Activated CD4-positive, alpha-beta T cell treated with anti-CD3 and anti-CD28 coated beads, Interleukin-2, amount 10 ng/mL, durations not matched to agents 24 days and 14 days (primary cell): ENCODE measurements at regions of chr19 and their contacts with region 1.

Region 1: DNA sequence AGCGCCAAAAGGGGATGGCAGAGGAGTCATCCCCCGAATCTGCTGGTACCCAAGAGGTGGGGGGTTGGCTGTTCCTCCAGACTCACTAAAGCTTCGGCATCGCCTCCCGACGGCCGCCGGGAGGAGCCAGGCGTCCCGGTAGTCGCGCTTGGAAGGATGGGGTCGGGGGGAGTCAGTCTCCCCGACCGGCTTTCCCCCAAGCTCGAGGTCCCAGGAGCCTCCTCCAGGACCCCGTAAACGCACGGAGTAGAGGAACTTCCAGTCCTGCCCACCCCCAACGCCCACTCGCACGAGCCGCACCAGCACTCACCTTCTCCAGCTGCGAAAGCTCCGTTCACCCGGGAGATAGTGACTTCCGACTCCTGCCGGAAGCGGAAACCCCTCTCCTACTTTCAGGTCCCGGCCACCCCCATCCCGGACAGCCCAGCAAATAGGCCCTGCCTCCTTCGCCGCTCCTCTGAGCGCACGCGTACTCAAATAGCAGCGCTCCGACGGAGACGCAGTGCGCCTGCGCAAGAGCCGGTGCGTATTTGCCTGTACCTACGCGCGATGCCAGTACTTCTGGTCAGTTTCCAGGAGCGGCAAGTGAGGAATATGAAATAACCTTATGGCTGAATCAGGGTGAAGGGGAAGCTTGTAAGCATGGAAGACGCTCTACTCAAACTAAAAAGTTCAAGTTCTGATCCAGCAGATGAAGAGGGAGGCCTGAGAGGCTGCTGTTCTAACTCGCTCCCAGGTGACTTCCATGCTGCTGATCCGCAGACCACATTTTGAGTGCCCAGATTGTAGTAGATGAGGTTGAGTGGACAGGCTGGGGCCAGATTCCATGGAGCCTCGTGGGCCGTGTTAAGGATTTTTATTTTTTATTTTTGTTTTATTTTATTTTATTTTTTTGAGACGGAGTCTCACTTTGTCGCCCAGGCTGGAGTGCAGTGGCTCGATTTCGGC is at the start of gene ELOF1:
- DNase-seq: peak; percentile 99
- H3K4me3 Mint-ChIP-seq: peak within 1 kb of the TSS; percentile 95
- H3K27ac Mint-ChIP-seq: peak within 1 kb of the TSS; percentile 96
- H3K4me1 Mint-ChIP-seq: peaks cover 42% of the 10 kb centered on the region
- H3K27me3 Mint-ChIP-seq: no peaks in the 10 kb centered on the region
- total RNA-seq, gene ELOF1: 71.9 and 74.2 TPM in 2 replicates

Region 2: DNA sequence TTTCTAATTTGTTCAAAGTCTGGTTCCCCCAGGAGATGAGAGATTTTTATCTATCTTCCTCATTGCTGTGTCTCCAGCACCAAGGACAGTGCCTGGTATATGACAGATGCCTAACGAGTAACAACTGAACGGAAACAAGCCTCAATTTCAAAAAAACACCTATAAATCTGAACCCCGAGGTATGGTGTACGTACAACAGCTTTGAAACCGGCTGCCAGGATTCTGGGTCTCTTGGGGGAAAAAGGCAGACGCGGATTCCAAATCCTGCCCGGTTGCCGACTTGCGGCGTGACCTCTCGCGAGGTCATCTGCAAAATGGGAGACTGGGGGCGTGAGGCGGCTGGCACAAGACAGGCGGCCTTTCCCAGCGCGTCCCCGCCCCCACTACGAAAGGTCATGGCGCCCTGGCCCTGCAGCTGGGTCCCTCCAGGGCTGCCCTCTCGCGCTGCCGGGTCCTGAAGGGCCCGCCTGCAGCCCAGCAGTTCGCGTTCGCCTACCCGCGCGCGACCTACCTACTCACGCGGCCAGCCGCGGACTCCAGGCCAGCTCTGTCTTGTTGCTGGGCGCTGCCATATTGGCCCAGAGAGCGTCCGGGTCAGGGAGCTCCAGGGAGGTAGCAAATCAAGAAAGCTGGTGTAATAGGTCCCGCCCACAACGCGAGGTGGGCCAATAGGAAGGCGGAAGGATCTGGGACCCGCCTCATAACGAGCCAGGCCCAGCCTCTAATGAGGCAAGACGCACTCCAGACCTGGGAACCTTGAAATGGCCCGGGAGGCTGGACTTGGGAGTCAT is 30.4 kb before region 1 on chr19 and contains the start of gene ECSIT:
- intact Hi-C with region 1: loop called (anchors 2 kb)
- DNase-seq: peak; percentile 97
- H3K4me3 Mint-ChIP-seq: peak within 1 kb of the TSS; percentile 93
- H3K27ac Mint-ChIP-seq: peak within 1 kb of the TSS; percentile 93
- H3K4me1 Mint-ChIP-seq: peaks cover 15% of the 10 kb centered on the region
- H3K27me3 Mint-ChIP-seq: no peaks in the 10 kb centered on the region
- total RNA-seq, gene ECSIT: 39.7 and 41.6 TPM in 2 replicates

Region 3: GRCh38 chr19:11535792-11536595 is 23.2 kb before region 1 on chr19:
- intact Hi-C with region 1: loop called (anchors 1 kb)
- DNase-seq: peak; percentile 96
- H3K4me3 Mint-ChIP-seq: peak overlapping the region; percentile 67
- H3K27ac Mint-ChIP-seq: peak overlapping the region; percentile 45
- H3K4me1 Mint-ChIP-seq: peaks cover 8% of the 10 kb centered on the region
- H3K27me3 Mint-ChIP-seq: peaks cover 29% of the 10 kb centered on the region

Region 4: GRCh38 chr19:11581740-11582139 is 22.6 kb after region 1 on chr19:
- intact Hi-C with region 1: loop called (anchors 1 kb)
- DNase-seq: peak; percentile 83
- H3K4me3 Mint-ChIP-seq: peak overlapping the region; percentile 76
- H3K27ac Mint-ChIP-seq: peak overlapping the region; percentile 90
- H3K4me1 Mint-ChIP-seq: peaks cover 23% of the 10 kb centered on the region
- H3K27me3 Mint-ChIP-seq: no peaks in the 10 kb centered on the region

Region 5: DNA sequence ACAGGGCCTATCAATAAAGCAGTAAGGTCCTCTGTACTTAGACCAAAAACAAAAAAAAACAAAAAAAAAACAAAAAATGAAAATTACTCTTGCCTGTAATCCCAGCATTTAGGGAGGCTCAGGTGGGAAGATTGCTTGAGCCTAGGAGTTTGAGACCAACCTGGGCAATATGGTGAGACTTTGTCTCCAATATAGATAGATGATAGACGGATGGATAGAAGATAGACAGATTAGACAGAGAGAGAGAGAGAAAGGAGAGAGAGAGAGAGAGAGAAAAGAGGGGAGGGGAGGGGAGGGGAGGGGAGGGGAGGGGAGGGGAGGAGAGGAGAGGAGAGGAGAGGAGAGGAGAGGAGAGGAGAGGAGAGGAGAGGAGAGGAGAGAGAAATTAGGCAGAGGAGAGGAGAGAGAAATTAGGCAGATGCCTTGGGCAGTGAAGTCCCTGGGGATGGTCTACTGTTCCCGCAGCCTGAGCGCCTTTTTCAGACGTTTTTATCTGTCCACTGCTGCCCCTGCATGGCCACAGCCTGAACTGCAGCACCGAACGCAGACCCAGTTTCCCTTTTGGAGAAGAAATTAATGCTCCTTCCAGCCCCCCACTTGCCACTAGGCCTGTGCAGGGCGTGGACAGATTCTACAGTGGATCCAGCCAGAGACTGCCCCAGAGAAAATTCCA is 28.3 kb after region 1 on chr19:
- intact Hi-C with region 1: loop called (anchors 1 kb)
- DNase-seq: peak; percentile 95
- H3K4me3 Mint-ChIP-seq: no peak overlapping the region
- H3K27ac Mint-ChIP-seq: peak overlapping the region; percentile 26
- H3K4me1 Mint-ChIP-seq: peaks cover 3% of the 10 kb centered on the region
- H3K27me3 Mint-ChIP-seq: no peaks in the 10 kb centered on the region